Gastrocnemius medialis (tissue), 4 donors: ENCODE measurements at regions of chr7 and their contacts with region 1.

Region 1: GRCh38 chr7:27130540-27131389 is at the start of gene HOXA4:
- DNase-seq: peak; percentile 93 to 94
- ATAC-seq: peak; percentile 71 to 90
- H3K4me3 ChIP-seq: peak within 1 kb of the TSS; percentile 89 to 94 (median 90)
- H3K27ac ChIP-seq: peak within 1 kb of the TSS; percentile 95 to 97 (median 96)
- H3K4me1 ChIP-seq: peaks cover 58 to 68% of the 10 kb centered on the region in 2 donors
- H3K27me3 ChIP-seq: no peaks in the 10 kb centered on the region
- CTCF ChIP-seq: no peak
- POLR2A ChIP-seq: peak; percentile 90 to 96
- total RNA-seq, gene HOXA4: 1.7 to 4.2 (median 2.9) TPM

Region 2: DNA sequence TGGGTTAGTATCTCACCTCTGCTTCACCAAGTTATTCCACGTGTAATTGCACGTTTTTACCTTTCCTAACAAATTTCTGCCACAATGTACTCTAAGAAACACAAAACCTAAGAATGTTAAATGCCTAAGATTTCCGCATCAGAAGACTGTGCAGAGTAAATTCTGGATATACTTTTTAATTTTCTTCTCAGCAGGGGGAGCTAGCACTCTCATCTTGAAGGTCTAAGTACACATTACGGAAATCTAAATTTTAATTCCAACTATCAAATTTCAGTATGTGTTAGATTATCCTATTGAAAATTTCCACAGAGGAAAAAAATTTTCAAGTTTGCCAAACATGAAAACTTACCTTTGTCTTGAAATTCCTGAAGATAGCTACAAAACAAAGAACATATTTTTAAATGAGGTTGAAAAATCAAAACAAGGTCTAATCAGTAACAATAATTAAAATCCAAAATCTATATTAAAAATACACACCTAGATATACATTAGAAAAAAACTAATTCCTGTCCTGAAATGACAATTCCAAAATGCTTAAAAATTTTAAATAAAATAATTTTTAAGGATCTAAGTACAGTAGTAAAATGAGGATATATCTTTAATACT is 276.9 kb before region 1 on chr7:
- in situ Hi-C with region 1: no loop called
- intact Hi-C with region 1: loop called (anchors 2 kb)
- DNase-seq: no peak
- ATAC-seq: peak; percentile 86 to 93
- H3K4me3 ChIP-seq: no peak overlapping the region
- H3K27ac ChIP-seq: no peak overlapping the region
- H3K4me1 ChIP-seq: no peaks in the 10 kb centered on the region
- H3K27me3 ChIP-seq: peaks cover 35 to 53% (median 52%) of the 10 kb centered on the region in 3 donors
- CTCF ChIP-seq: peak; percentile 40 to 73 (median 63)
- POLR2A ChIP-seq: no peak

Region 3: GRCh38 chr7:26864309-26865093 is 266.3 kb before region 1 on chr7 and contains the start of gene SKAP2:
- in situ Hi-C with region 1: no loop called
- intact Hi-C with region 1: loop called (anchors 2 kb)
- DNase-seq: peak; percentile 94 to 96
- ATAC-seq: peak; percentile 97 to 98
- H3K4me3 ChIP-seq: peak within 1 kb of the TSS; percentile 67 to 83 (median 72)
- H3K27ac ChIP-seq: peak within 1 kb of the TSS; percentile 79 to 89 (median 87)
- H3K4me1 ChIP-seq: no peaks in the 10 kb centered on the region
- H3K27me3 ChIP-seq: peaks cover 28 to 42% (median 33%) of the 10 kb centered on the region in 3 donors
- CTCF ChIP-seq: no peak
- POLR2A ChIP-seq: peak; percentile 75 to 85
- total RNA-seq, gene SKAP2: 6.1 to 23.5 (median 17.1) TPM

Region 4: DNA sequence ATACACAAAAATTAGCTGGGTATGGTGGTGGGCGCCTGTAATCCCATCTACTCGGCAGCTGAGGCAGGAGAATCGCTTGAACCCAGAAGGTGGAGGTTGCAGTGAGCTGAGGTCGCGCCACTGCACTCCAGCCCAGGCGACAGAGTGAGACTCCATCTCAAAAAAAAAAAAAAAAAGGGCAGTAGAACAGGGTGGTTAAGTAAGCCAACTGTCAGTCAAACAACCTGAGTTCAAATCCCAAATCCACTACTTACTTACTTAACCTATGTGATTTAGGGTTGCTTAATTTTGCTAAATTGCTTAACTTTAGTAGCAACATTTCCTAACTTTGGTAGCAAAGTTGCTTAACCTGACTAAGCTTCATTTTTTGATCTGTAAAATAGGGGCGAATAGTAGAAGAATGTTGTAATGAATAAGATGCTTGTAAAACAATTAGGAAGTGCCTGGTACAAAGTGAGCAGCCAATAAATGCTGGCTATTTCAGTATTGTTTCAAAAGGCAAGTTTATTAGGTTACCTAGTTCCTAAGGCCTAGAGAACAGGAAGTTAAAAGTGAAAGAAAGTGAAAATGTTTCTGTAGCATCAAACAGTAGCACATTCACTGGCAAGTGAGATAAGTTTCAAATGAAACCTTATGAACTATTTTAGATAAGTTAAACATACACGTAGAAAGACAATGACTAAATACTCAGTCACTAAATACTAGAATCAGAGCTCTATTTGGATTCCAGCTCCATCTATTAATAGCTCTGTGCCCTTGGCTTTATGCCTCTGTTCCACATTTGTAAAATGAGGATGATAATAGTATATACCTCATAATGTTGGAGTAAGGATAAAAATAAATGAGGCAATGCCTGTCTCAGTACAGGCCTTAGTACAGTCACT is 99.2 kb before region 1 on chr7:
- in situ Hi-C with region 1: no loop called
- intact Hi-C with region 1: loop called (anchors 5 kb)
- DNase-seq: peak in 1 of 2 donors; percentile 29
- ATAC-seq: peak; percentile 96
- H3K4me3 ChIP-seq: peak overlapping the region in 1 of 4 donors; percentile 9
- H3K27ac ChIP-seq: peak overlapping the region; percentile 66 to 76 (median 70)
- H3K4me1 ChIP-seq: peaks cover 20 to 21% of the 10 kb centered on the region in 2 donors
- H3K27me3 ChIP-seq: no peaks in the 10 kb centered on the region
- CTCF ChIP-seq: no peak
- POLR2A ChIP-seq: no peak

Region 5: DNA sequence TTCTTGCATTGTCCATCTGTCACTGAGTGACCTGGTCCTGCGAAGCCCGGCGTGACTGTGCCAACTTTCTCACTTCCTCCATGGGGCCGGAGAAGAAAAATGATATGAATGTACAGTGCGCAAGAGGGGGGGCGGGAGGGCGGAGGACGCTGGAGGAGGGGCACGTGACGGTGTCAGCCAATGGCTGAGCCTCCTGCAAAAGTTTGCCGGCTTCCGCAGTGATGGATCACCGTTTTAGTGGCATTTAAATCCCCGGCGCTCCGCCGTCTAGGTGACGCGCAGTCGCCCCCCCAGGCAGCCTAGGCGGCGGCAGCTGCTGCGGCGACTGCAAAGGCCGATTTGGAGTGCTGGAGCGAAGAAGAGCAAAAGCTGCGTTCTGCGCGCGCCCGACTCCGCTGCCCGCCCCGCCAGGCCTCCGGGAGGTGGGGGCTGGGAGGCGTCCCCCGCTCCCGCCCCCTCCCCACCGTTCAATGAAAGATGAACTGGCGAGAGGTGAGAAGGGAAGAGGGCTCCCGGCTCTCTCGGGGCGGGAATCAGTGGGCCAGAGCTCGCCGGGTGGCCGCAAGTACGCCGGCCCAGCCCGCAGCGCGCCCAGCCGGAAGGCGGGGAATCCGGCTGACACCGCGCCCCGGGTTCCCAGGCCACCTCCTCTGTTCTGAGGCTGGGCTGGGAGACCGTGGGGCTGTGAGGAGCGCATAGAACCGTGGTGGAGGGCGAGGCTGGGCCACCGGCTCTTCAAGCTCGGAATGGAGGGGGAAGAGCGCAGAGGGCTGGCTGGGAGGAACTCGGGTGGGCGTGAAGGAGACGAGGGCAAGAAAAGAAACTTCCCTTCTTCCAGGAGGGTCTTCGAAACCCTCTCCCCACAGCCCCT is 34.6 kb before region 1 on chr7 and contains the start of gene HOXA1:
- in situ Hi-C with region 1: no loop called
- intact Hi-C with region 1: loop called (anchors 2 kb)
- DNase-seq: peak; percentile 52 to 55
- ATAC-seq: peak; percentile 82 to 83
- H3K4me3 ChIP-seq: peak within 1 kb of the TSS; percentile 78 to 97 (median 88)
- H3K27ac ChIP-seq: peak within 1 kb of the TSS; percentile 73 to 82 (median 80)
- H3K4me1 ChIP-seq: peaks cover 11 to 24% of the 10 kb centered on the region in 2 donors
- H3K27me3 ChIP-seq: no peaks in the 10 kb centered on the region
- CTCF ChIP-seq: peak in 1 of 5 experiments; percentile 13
- POLR2A ChIP-seq: peak; percentile 41 to 59
- total RNA-seq, gene HOXA1: 0.16 to 0.36 TPM in 2 of 4 donors, not detected in the others

Region 6: DNA sequence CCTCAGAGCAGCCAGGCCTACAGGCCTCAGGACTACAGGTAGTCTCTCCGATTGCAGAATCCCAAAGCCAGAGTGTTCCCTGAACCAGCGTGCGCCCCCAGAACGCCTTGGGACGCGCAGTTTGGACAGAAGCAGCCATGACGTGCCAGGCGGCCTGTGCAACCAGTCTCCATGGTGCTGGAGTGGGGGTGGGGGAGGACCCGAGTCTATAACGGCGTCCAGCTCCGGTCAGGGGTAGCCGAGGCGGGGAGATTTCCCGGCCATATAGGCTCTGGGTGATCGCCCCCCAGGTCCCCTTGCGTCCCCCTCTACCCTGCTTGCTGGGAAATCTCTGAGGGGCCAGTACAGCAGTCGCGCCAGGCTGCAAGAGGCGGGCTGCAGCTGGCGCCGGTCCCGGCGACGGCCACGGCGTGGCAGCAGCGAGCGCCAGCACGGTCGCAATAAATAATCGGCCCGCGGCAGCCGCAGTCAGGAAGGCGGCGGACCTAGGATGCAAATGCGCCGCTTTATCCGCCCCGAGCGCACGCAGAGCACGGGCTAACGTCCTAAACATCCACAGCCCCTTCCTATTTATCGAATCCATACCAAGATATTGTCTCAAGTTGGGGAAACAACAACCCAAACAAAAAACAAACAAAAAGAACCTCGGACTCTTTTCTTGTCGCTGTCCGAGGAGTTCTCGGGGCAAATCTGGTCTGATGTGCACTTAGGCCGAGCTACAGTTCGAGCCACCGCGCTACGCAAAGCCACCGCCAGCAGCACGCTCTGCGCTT is 20.0 kb after region 1 on chr7:
- in situ Hi-C with region 1: no loop called
- intact Hi-C with region 1: loop called (anchors 1 kb)
- DNase-seq: peak; percentile 66 to 78
- ATAC-seq: peak; percentile 65 to 69
- H3K4me3 ChIP-seq: peak overlapping the region; percentile 64 to 75 (median 70)
- H3K27ac ChIP-seq: peak overlapping the region; percentile 90 to 96 (median 94)
- H3K4me1 ChIP-seq: peaks cover 56 to 70% of the 10 kb centered on the region in 2 donors
- H3K27me3 ChIP-seq: no peaks in the 10 kb centered on the region
- CTCF ChIP-seq: peak; percentile 86 to 92 (median 89)
- POLR2A ChIP-seq: peak; percentile 84 to 87

Region 7: DNA sequence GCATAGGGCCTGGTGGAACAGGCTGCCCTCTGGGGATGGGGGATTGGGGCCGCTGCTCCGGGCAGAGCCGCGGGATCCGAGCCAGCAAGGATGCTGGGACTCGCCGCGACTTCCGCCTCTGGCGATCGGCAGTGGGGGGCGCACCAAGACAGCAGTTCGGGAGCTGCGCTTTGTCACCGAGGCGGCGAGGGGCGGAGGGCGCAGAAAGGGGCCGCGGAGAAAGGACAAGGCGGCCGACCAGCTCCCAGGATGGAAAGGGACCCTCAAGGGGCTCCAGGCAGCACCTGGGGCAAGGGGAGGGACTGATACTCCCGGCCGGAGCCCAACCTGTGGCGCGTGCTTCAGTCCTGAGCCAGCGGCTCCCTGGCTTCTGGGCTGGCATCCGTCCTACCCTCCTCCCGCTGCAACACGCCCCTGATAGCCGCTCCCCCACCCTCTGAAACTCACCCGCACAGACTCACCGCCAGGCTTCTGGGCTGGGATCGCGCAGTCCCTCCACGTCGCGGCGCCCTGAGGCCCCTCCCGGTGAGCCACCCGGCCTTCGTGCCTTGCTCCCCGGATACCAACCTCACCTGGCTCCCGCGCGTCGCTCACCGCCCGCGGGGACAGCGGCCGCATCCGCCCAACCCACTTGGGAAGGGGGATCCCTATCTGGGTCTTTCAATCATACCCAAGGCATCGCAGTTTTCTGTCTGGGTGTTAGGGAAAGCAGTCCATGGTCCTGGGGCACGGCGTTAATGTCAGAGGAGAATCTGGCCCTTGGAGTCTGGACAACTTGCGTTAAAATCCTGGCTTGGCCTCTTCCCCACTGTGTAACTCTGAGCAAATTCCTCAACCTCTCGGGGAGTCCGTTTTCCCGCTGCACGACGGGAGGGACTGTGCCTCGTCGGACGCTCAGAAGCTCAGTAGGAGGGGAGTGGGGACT is 104.9 kb after region 1 on chr7:
- in situ Hi-C with region 1: no loop called
- intact Hi-C with region 1: no loop called
- DNase-seq: no peak
- ATAC-seq: no peak
- H3K4me3 ChIP-seq: peak overlapping the region; percentile 39 to 59 (median 54)
- H3K27ac ChIP-seq: no peak overlapping the region
- H3K4me1 ChIP-seq: peaks cover 0 to 17% of the 10 kb centered on the region in 2 donors
- H3K27me3 ChIP-seq: peaks cover 47 to 65% (median 57%) of the 10 kb centered on the region in 3 donors
- CTCF ChIP-seq: peak in 3 of 5 experiments; percentile 25 to 52 (median 37)
- POLR2A ChIP-seq: no peak

Region 8: GRCh38 chr7:27295236-27295635 is 164.5 kb after region 1 on chr7:
- in situ Hi-C with region 1: no loop called
- intact Hi-C with region 1: no loop called
- DNase-seq: no peak
- ATAC-seq: no peak
- H3K4me3 ChIP-seq: no peak overlapping the region
- H3K27ac ChIP-seq: no peak overlapping the region
- H3K4me1 ChIP-seq: no peaks in the 10 kb centered on the region
- H3K27me3 ChIP-seq: no peaks in the 10 kb centered on the region
- CTCF ChIP-seq: no peak
- POLR2A ChIP-seq: no peak